ENCODE measurements at regions of chr9 and their contacts with region 1.

Region 1: GRCh38 chr9:113589890-113590289 is 126.4 kb downstream of the RGS3 start:
- DNase-seq: no peak
- H3K4me3 ChIP-seq: no peak overlapping the region
- CTCF ChIP-seq: peak; percentile 86

Region 2: DNA sequence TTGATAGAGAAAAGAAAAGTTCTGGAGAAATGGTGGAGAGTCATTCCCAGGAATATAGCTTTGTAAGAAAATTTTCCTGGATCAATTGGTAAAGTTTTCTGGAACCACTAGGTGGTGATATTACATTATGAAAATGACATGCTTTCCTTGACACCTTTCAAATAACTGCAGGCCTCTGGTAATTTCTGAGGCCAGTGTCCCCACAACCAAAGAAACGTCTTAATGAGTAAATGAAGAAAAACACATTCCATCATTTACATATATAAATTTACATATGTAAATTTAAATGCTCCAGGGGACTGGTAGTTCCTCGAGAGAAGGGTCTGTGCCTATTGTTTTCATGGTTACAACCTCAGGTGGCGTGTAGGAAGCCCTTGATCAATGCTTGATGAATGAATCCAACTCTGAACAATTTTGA is 143.6 kb before region 1 on chr9:
- in situ Hi-C with region 1: loop called (anchors 5 kb)
- DNase-seq: peak; percentile 33
- H3K4me3 ChIP-seq: no peak overlapping the region
- CTCF ChIP-seq: peak; percentile 38

Region 3: GRCh38 chr9:113484258-113484730 is 105.6 kb before region 1 on chr9:
- in situ Hi-C with region 1: no loop called
- DNase-seq: no peak
- H3K4me3 ChIP-seq: no peak overlapping the region
- CTCF ChIP-seq: no peak

Region 4: GRCh38 chr9:113632776-113633590 is 43.1 kb after region 1 on chr9:
- in situ Hi-C with region 1: no loop called
- DNase-seq: no peak
- H3K4me3 ChIP-seq: no peak overlapping the region
- CTCF ChIP-seq: no peak